ENCODE measurements at regions of chr11 and their contacts with region 1.

Region 1: GRCh38 chr11:61193596-61193995 is 9.7 kb upstream of the PGA3 start:
- DNase-seq: no peak
- ATAC-seq: no peak
- H3K4me3 ChIP-seq: no peak overlapping the region
- H3K27ac ChIP-seq: no peak overlapping the region
- H3K4me1 ChIP-seq: no peaks in the 10 kb centered on the region
- H3K27me3 ChIP-seq: no peaks in the 10 kb centered on the region
- CTCF ChIP-seq: no peak
- EP300 ChIP-seq: no peak
- POLR2A ChIP-seq: no peak
- RAD21 ChIP-seq: no peak

Region 2: DNA sequence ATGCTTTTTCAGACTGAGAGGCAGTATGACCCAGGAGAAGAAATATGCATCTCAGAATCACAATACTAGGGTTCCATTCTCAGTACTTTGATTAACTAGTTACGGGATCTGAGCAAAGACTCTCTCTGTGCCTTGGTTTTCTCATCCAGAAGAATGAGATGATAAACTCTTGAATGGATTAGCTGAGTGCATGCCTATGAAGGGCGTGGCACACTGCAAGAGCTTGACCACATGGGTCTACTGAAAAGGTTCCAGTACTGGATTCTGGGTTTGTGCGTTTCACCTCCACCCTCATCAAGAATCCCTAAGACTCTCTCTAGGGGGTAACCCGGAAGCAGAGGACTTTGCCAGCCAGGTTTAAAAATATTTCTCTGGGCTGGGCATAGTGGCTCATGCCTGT is 73.0 kb after region 1 on chr11:
- CTCF ChIA-PET with region 1: interaction called, 4 read pairs
- POLR2A ChIA-PET with region 1: no interaction called
- RAD21 ChIA-PET with region 1: no interaction called
- SMC1A ChIA-PET with region 1: no interaction called
- in situ Hi-C with region 1: loop called (anchors 5 kb)
- intact Hi-C with region 1: no loop called
- DNase-seq: no peak
- ATAC-seq: no peak
- H3K4me3 ChIP-seq: no peak overlapping the region
- H3K27ac ChIP-seq: no peak overlapping the region
- H3K4me1 ChIP-seq: no peaks in the 10 kb centered on the region
- H3K27me3 ChIP-seq: no peaks in the 10 kb centered on the region
- CTCF ChIP-seq: no peak
- EP300 ChIP-seq: no peak
- POLR2A ChIP-seq: no peak
- RAD21 ChIP-seq: no peak